Heart right ventricle (tissue), 16 donors: ENCODE measurements at regions of chr4 and their contacts with region 1.

Region 1: DNA sequence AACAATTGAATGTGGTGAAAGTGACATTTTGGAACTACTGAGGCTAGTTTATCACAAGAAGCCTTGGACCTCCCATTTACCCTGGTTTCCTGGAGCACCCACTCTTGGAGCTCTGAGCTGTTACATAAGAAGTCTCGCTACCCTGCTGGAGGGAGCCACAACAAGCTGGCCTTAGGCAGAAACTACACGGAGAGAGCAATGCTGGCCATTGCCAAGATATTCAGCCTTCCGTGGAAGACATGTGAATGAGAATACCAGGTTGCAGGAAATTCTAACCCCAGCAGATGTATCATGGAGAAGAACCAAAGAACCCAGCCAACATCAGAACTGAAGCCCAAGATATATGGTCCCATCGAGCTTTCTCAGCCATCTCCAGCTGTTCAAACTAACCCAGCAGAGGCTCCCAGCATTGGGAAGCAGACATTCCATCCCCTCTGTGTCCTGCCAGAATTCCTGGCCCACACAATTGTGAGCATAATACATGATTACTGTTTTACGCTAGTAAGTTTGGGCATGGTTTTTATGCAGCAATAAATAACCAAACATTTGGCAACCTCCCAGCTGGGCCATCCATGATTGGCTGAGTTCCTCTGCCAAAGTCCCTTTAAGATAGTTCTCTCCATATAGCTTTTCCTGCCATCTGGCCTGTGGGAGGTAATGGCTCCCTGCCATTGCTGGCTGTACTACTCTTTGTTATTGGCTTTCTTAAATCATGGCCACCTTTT is 17.9 kb upstream of the PDE5A start:
- DNase-seq: peak in 1 of 2 donors; percentile 49
- ATAC-seq: peak; percentile 55 to 94 (median 88)
- H3K4me3 ChIP-seq: no peak overlapping the region
- H3K27ac ChIP-seq: peak overlapping the region in 7 of 10 donors; percentile 4 to 65 (median 49)
- H3K4me1 ChIP-seq: peaks cover 0 to 12% (median 0%) of the 10 kb centered on the region in 9 donors
- H3K27me3 ChIP-seq: no peaks in the 10 kb centered on the region
- CTCF ChIP-seq: no peak

Region 2: GRCh38 chr4:119536572-119537528 is 109.7 kb before region 1 on chr4:
- intact Hi-C with region 1: no loop called
- DNase-seq: no peak
- ATAC-seq: no peak
- H3K4me3 ChIP-seq: no peak overlapping the region
- H3K27ac ChIP-seq: peak overlapping the region in 1 of 10 donors; percentile 16
- H3K4me1 ChIP-seq: peaks cover 0 to 7% (median 0%) of the 10 kb centered on the region in 9 donors
- H3K27me3 ChIP-seq: no peaks in the 10 kb centered on the region
- CTCF ChIP-seq: no peak

Region 3: DNA sequence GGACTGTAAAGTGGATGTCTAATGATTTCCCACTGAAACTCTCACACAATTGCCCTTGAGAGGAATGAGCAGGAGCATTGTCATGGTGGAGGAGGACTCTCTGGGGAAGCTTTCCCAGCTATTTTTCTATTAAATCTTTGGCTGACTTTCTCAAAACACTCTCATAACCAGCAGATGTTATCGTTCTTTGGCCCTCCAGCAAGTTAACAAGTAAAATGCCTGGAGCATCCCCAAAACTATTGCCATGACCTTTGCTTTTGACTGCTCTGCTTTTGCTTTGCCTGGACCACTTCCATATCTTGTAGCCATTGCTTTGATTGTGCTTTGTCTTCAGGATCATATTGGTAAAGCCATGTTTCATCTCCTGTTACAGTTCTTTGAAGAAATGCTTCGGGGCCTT is 102.3 kb after region 1 on chr4:
- intact Hi-C with region 1: loop called in 1 of 10 experiments (anchors 10 kb)
- DNase-seq: no peak
- ATAC-seq: peak in 5 of 8 donors; percentile 18 to 49 (median 20)
- H3K4me3 ChIP-seq: no peak overlapping the region
- H3K27ac ChIP-seq: peak overlapping the region in 5 of 10 donors; percentile 7 to 66 (median 23)
- H3K4me1 ChIP-seq: peaks cover 0 to 26% (median 0%) of the 10 kb centered on the region in 9 donors
- H3K27me3 ChIP-seq: no peaks in the 10 kb centered on the region
- CTCF ChIP-seq: no peak

Region 4: DNA sequence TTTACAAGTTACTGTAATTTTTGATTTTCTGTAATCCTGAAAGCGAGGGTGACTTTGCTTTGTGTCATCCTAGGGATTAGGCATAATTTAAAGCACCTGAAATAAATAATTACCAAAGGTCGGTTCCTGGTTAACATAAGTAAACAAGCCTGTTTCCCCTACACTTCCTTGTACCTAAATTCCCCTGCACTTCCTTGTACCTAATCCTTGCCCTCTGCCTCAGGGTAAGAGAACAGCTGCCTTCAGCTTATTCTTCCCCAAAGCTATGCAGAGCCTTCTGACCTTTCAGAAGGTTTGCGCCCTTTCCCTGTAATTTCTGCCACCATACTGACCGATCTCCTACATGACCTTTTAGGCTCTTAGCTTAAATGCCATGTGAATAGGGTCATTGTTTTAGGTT is 148.2 kb after region 1 on chr4:
- intact Hi-C with region 1: loop called in 1 of 10 experiments (anchors 10 kb)
- DNase-seq: no peak
- ATAC-seq: no peak
- H3K4me3 ChIP-seq: no peak overlapping the region
- H3K27ac ChIP-seq: no peak overlapping the region
- H3K4me1 ChIP-seq: no peaks in the 10 kb centered on the region
- H3K27me3 ChIP-seq: no peaks in the 10 kb centered on the region
- CTCF ChIP-seq: no peak

Region 5: GRCh38 chr4:119971431-119972084 is 325.0 kb after region 1 on chr4:
- intact Hi-C with region 1: no loop called
- DNase-seq: no peak
- ATAC-seq: no peak
- H3K4me3 ChIP-seq: no peak overlapping the region
- H3K27ac ChIP-seq: no peak overlapping the region
- H3K4me1 ChIP-seq: peaks cover 0 to 10% (median 0%) of the 10 kb centered on the region in 9 donors
- H3K27me3 ChIP-seq: no peaks in the 10 kb centered on the region
- CTCF ChIP-seq: no peak